BJ (cell line): ENCODE measurements at regions of chr14 and their contacts with region 1.

Region 1: DNA sequence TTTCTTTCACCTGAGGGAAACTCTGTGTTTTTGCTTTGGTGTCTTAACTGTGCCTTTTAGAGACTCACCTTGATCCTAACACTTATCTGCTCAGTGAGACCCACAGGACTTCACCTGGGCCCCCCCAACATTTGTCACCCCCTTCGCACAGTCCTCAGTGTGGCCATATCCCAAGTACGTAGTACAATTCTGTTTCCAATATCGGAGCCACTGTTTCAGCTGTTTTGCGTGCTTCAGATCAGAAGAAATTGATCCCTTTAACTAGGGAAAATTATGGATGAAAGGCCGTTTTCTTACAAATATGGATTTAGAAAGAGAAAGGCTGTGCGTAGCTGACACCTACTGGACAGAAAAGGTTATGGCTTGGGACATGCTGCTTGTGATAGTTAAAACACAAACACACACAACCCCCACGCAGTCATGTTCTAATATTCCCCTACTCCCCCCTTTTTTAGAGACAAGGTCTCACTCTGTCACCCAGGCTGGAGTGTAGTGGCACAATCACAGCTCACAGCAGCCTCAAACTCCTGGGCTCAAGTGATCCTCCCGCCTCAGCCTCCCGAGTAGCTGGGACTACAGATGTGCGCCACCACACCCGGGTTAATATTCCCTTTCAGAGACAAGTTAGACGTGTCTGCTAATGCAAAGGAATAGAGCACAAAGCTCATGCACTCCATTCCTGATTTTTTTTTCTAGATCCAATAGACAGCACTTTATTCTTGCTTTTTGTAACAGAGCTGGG is 3.6 kb upstream of the SLC7A8 start:
- DNase-seq: no peak
- H3K4me3 ChIP-seq: no peak overlapping the region
- H3K27me3 ChIP-seq: peaks cover 1% of the 10 kb centered on the region; the same call in 1 of the 2 replicates
- CTCF ChIP-seq: peak; percentile 80

Region 2: GRCh38 chr14:23147676-23148075 is 39.4 kb before region 1 on chr14:
- CTCF ChIA-PET with region 1: interaction called, 18 read pairs
- POLR2A ChIA-PET with region 1: no interaction called
- DNase-seq: no peak
- H3K4me3 ChIP-seq: no peak overlapping the region
- H3K27me3 ChIP-seq: no peaks in the 10 kb centered on the region
- CTCF ChIP-seq: no peak

Region 3: GRCh38 chr14:23154964-23155587 is 32.0 kb before region 1 on chr14:
- CTCF ChIA-PET with region 1: interaction called, 18 read pairs
- POLR2A ChIA-PET with region 1: no interaction called
- DNase-seq: no peak
- H3K4me3 ChIP-seq: no peak overlapping the region
- H3K27me3 ChIP-seq: no peaks in the 10 kb centered on the region
- CTCF ChIP-seq: 0 out of 2 replicates have a peak, but pooled peaks have one; percentile 3

Region 4: DNA sequence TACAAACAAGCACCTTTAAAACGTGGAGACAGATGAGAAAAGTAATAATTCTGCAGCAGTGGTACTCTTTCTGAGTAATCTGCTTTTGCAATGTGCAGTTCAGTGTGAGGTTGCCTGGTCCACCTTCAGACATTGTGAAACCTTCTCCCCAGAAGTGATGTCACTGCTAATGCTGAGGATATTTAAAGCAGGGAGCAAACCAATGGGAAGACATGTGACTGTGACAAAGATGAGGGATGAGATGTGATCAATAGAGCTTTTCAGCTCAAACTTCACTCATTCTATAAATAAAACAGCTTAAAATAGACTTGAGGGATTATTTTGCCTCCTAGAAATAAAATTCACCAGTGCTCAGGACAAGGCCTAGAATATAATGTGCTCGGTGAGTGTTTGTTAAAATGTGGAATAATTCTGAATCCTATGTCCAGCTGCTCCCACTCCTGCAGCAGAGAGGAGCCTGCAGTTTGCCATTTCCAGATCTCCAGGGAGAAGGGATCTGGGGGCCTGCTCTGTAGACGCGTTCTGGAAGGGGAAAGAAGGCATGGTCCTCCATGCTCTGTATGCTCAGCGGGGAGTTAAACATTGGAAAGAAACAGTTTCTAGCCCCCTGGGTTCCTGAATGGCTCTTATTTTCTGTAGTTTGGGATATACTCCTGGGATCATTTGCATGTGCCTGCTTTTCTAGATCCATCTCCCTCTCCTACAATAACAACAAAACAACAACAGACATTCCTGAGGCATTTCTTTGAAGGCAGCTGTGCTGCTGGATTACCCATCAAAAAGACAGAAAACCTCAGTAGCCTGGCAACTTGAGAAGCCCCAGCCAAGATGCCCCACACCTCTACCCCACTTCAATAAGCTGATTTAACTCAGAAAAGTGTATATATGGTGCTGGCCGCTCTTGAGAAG is 12.6 kb before region 1 on chr14:
- CTCF ChIA-PET with region 1: interaction called, 58 read pairs
- POLR2A ChIA-PET with region 1: no interaction called
- DNase-seq: no peak
- H3K4me3 ChIP-seq: no peak overlapping the region
- H3K27me3 ChIP-seq: no peaks in the 10 kb centered on the region
- CTCF ChIP-seq: no peak

Region 5: GRCh38 chr14:23202001-23202400 is 14.9 kb after region 1 on chr14:
- CTCF ChIA-PET with region 1: interaction called, 13 read pairs
- POLR2A ChIA-PET with region 1: no interaction called
- DNase-seq: no peak
- H3K4me3 ChIP-seq: no peak overlapping the region
- H3K27me3 ChIP-seq: no peaks in the 10 kb centered on the region
- CTCF ChIP-seq: no peak